Activated CD4-positive, alpha-beta T cell treated with anti-CD3 and anti-CD28 coated beads for 36 hours (primary cell): ENCODE measurements at regions of chr11 and their contacts with region 1.

Region 1: DNA sequence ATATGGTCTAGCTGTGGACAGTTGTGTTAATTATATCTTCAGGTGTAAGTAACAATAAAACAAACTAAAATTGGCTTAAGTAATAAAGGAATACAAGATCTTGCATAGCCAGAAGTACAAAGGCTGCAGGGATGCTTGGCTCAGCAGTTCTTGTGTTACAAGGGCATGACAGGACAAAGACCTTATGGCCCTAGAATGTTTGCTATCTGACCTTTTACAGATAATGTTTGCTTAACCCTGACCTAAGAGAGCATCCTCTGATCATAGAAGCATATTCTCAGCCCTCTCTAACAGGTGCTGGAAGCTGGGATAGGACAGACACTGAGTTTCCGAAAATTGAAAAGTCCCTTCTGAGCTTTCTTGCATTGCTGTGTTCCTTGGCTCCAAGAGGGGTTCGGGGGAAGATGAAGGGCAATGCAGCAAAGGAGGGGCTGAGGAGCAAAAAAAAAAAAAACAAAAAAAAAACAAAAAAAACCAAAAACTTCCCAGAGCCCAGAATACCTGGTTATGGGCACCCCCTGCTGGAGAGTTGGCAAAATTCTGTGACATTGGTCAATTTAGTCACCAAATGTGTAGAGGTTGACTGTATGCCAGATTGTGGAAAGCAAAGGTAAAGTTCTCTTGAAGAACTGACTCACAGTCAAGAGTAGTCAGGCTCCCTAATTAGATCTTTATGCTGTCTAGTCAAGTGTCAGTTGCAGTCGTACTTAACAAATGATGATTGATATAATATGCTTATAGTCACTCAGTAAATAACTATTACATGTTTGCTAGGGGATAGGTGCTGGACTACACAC is 10.4 kb upstream of the HIKESHI start:
- DNase-seq: peak; percentile 85
- ATAC-seq: peak; percentile 48
- H3K4me3 Mint-ChIP-seq: peak overlapping the region; percentile 17
- H3K27ac Mint-ChIP-seq: peak overlapping the region; percentile 89
- H3K4me1 Mint-ChIP-seq: peaks cover 63% of the 10 kb centered on the region
- H3K27me3 Mint-ChIP-seq: no peaks in the 10 kb centered on the region

Region 2: DNA sequence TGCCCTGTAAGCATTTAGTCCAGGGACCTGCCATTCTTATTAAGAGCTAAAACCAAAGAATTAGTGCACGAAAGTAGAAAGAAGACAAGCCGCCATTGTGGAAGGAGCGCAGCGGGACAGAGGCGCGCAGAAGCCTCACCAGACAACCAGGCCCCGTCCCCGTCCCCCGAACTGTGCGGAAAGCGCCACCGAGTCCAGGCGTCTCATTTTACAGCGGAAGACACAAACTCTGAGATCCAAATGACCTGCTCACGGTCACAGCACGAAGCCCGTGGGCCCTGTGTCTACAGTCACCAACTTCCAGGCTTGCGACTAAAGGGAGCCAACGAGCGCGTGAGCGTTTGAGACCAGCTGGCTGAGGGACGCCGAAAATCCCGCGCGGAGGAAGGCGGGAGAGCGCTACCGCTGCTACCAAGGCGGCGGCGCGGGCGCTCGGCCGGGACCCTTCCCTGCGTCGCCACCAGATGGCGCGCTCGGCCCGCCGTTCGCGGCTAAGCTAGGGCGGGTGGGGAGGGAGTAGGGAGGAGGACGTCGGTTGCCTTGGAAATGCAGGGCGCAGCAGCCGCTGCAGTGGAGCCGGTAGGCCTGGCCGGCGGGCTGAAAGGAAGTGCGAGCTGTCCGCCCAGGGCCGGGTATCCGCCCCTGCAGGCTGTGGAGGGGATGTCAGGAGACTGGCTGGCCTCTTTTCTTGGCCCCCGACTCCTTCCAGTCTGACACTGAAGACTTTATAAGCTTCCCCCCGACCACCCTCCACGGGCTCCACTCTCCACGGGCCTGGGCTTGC is 436.9 kb before region 1 on chr11:
- CTCF ChIA-PET with region 1: interaction called, 4 read pairs
- POLR2A ChIA-PET with region 1: no interaction called
- intact Hi-C with region 1: loop called (anchors 1 kb)
- DNase-seq: peak; percentile 94
- ATAC-seq: peak; percentile 93
- H3K4me3 Mint-ChIP-seq: peak overlapping the region; percentile 77
- H3K27ac Mint-ChIP-seq: peak overlapping the region; percentile 94
- H3K4me1 Mint-ChIP-seq: peaks cover 2% of the 10 kb centered on the region
- H3K27me3 Mint-ChIP-seq: no peaks in the 10 kb centered on the region

Region 3: DNA sequence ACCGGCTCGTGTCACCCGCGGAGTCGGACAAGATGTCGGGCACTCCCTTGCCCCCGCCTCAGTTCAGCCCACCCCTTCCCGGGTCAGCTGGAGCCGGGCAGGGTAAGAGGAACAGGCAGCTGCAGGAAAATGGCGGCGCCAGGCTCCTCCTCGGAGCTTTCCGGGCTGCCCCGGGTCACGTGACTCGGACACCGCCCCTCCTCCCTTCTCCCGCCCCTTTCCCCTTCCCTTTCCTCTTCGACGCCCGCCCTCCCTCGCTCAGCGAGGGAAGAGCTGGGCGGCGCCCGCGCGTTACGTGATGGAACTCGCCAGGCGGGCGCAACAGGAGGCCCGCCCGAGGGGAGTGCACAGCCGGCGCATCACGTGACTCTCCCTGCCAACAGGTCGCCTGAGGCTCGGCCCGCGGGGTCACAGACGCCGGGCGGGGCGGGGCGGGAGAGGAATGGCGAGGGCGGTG is 222.7 kb before region 1 on chr11 and contains the start of gene PICALM:
- CTCF ChIA-PET with region 1: interaction called, 4 read pairs
- POLR2A ChIA-PET with region 1: interaction called, 6 read pairs
- intact Hi-C with region 1: loop called (anchors 1 to 2 kb)
- DNase-seq: peak; percentile 99
- ATAC-seq: peak; percentile 87
- H3K4me3 Mint-ChIP-seq: peak within 1 kb of the TSS; percentile 89
- H3K27ac Mint-ChIP-seq: peak within 1 kb of the TSS; percentile 91
- H3K4me1 Mint-ChIP-seq: peaks cover 27% of the 10 kb centered on the region
- H3K27me3 Mint-ChIP-seq: no peaks in the 10 kb centered on the region
- total RNA-seq, gene PICALM: 63.8 to 88.3 TPM

Region 4: DNA sequence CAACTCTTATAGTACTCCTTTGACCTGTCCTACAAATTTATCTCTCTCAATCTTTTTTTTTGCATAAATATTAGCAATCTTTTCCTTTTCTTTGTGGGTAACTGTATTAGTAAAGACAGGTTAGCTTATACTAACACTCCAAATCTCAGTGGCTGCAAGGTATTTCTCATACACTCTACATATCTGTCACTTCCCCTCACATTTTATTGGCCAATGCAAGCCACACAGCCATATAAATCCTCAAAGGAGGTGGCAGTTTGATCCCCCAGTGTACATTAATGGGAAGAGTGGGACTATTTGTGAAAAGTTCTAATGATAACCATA is 89.7 kb before region 1 on chr11:
- CTCF ChIA-PET with region 1: interaction called, 5 read pairs
- POLR2A ChIA-PET with region 1: no interaction called
- intact Hi-C with region 1: loop called in 1 of 2 experiments (anchors 1 kb)
- DNase-seq: peak; percentile 39
- ATAC-seq: peak; percentile 94
- H3K4me3 Mint-ChIP-seq: no peak overlapping the region
- H3K27ac Mint-ChIP-seq: no peak overlapping the region
- H3K4me1 Mint-ChIP-seq: peaks cover 6% of the 10 kb centered on the region
- H3K27me3 Mint-ChIP-seq: peaks cover under 1% of the 10 kb centered on the region

Region 5: DNA sequence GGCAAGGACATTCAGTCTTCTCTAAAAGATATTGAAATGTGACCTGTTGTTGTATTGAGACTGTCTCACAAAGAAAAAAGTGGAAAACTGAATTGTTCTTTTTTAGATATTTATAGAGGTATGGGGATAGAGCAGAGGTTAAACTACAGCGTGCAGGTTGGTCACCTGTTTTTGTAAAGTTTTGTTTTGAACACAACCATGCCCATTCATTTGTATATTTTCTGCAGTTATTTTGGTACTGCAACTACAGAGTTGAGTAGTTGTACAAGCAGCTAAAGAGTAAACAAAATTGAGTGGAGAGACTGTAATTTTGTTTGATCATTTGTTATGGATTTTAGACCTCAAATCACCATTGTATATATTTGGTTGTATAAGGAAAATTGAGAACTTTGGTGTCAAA is 35.8 kb before region 1 on chr11:
- CTCF ChIA-PET with region 1: no interaction called
- POLR2A ChIA-PET with region 1: no interaction called
- intact Hi-C with region 1: loop called in 1 of 2 experiments (anchors 1 kb)
- DNase-seq: no peak
- ATAC-seq: peak; percentile 54
- H3K4me3 Mint-ChIP-seq: no peak overlapping the region
- H3K27ac Mint-ChIP-seq: peak overlapping the region; percentile 72
- H3K4me1 Mint-ChIP-seq: peaks cover 53% of the 10 kb centered on the region
- H3K27me3 Mint-ChIP-seq: no peaks in the 10 kb centered on the region

Region 6: GRCh38 chr11:86740709-86741483 is 449.2 kb after region 1 on chr11:
- CTCF ChIA-PET with region 1: no interaction called
- POLR2A ChIA-PET with region 1: no interaction called
- intact Hi-C with region 1: loop called in 1 of 2 experiments (anchors 5 kb)
- DNase-seq: peak; percentile 60
- ATAC-seq: peak; percentile 52
- H3K4me3 Mint-ChIP-seq: no peak overlapping the region
- H3K27ac Mint-ChIP-seq: peak overlapping the region; percentile 62
- H3K4me1 Mint-ChIP-seq: peaks cover 30% of the 10 kb centered on the region
- H3K27me3 Mint-ChIP-seq: peaks cover 14% of the 10 kb centered on the region